B cell (primary cell): ENCODE measurements at regions of chr10 and their contacts with region 1.

Region 1: DNA sequence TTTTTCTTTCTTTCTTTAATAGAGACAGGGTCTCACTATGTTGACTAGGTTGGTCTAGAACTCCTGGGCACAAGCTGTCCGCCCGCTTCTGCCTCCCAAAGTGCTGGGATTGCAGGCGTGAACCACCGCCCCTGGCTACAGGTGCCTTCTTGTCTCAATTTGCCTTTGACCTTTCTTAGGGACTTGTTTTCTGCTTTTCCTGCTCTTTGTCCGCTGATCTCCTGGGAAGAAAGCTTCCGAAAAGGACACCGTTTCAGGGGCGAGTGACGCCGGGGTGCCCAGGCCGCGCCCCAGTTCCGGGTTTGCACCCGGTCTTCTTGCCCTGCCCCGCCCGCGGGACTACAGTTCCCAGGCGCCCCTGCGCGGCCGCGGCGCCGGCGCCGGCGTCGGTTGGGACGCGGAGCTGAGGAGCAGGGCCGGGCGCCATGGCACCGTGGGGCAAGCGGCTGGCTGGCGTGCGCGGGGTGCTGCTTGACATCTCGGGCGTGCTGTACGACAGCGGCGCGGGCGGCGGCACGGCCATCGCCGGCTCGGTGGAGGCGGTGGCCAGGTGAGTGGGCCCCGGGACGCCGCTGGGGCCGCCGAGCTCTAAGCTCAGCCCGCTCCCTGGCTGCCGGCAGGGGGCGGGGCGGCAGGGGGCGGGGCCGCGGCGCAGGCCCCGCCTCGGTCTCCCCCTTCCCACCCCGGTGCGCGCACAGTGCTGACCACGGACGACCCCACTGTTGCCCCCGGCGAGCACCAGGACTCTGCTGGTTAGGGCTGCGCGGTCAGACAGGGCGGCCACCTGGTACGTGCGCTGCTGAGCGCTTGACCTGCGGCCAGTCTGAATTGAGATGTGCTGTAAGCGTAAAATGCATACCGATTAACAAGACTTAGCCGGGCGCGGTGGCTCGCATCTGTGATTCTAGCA is at the start of gene LHPP:
- DNase-seq: peak; percentile 93
- ATAC-seq: peak; percentile 91
- H3K4me3 ChIP-seq: peak within 1 kb of the TSS in 4 of 5 experiments; percentile 43 to 71 (median 65)
- H3K4me3 Mint-ChIP-seq: peak within 1 kb of the TSS; percentile 97
- H3K27ac ChIP-seq: peak within 1 kb of the TSS; percentile 54 to 71
- H3K27ac Mint-ChIP-seq: peak within 1 kb of the TSS; percentile 98
- H3K4me1 ChIP-seq: peaks cover 23 to 35% of the 10 kb centered on the region in 2 donors
- H3K4me1 Mint-ChIP-seq: peaks cover 30% of the 10 kb centered on the region
- H3K27me3 ChIP-seq: peaks cover 0 to 3% (median under 1%) of the 10 kb centered on the region in 4 experiments
- H3K27me3 Mint-ChIP-seq: peaks cover 7% of the 10 kb centered on the region
- CTCF ChIP-seq: peak; percentile 35
- total RNA-seq, gene LHPP: 82.4 and 83.5 TPM in 2 replicates

Region 2: GRCh38 chr10:124612611-124613498 is 151.2 kb after region 1 on chr10:
- CTCF ChIA-PET with region 1: no interaction called
- POLR2A ChIA-PET with region 1: no interaction called
- intact Hi-C with region 1: loop called (anchors 10 kb)
- DNase-seq: peak; percentile 70
- ATAC-seq: peak; percentile 63
- H3K4me3 ChIP-seq: no peak overlapping the region
- H3K4me3 Mint-ChIP-seq: peak overlapping the region; percentile 57
- H3K27ac ChIP-seq: peak overlapping the region; percentile 86 to 97
- H3K27ac Mint-ChIP-seq: peak overlapping the region; percentile 90
- H3K4me1 ChIP-seq: peaks cover 79 to 96% of the 10 kb centered on the region in 2 donors
- H3K4me1 Mint-ChIP-seq: peaks cover 77% of the 10 kb centered on the region
- H3K27me3 ChIP-seq: no peaks in the 10 kb centered on the region
- H3K27me3 Mint-ChIP-seq: no peaks in the 10 kb centered on the region
- CTCF ChIP-seq: no peak